ENCODE measurements at regions of chr3 and their contacts with region 1.

Region 1: DNA sequence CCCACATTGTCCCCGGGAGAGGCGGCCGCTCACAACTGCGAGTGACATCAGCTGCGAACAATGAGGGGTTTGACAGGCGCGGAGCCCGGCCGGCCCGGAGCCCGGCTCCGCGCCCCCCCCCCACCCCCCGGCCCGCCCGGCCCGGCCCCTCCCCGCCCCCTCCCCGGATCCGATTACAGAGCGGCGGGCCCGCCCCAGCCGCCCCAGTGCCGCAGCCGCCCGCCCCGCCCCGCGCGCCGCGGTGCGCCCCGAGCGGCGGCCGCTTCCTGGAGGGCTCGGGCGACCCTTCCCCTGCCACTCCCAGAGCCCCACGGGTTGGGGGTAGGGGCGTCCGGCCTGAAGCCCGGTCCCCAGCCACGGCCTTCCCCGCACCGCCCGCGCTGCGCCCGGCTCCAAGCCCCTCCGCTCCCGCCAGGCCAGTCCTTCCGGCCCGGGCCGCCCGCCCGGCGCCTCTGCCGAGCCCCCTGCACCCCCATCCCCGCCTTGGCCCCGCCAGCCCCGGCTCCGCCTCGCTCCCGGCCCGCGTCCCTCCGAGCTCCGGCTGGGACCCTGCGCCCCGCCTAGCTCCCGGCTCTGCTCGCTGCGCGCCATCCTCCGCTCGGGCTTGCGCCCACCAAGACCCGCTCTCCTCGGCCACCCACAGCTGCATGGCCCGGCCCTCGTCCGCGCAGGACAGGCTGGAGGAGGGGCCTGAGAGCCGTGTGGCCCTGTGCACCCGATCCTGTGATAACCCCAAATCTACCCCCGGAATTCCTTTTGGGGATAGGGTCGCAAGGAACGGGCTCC is at the start of gene PCBP4:
- DNase-seq: peak; percentile 45
- H3K4me3 ChIP-seq: peak within 1 kb of the TSS; percentile 37 to 75 (median 68)
- H3K27ac ChIP-seq: peak within 1 kb of the TSS; percentile 59
- H3K4me1 ChIP-seq: peaks cover 4% of the 10 kb centered on the region
- H3K27me3 ChIP-seq: no peaks in the 10 kb centered on the region
- CTCF ChIP-seq: no peak
- POLR2A ChIP-seq: no peak
- total RNA-seq, gene PCBP4: 42.7 and 46.5 TPM in 2 replicates

Region 2: DNA sequence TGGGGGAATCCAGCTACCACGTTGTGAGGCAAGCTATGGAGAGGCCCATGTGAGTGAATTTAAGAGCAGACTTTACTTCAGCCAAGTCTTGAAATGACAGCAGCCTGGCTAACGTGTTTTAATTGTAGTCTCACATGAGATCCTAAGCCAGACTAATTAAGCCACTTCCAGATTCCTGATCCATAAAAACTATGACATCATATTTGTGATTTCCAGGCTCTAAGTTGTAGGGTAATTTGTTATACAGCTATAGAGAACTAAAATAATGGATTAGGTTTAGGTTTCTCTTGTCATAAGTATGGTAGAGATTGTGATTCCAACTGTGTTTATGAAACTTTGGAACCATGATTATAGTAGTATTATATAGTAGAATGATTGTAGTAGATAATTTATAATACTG is 963.3 kb before region 1 on chr3:
- CTCF ChIA-PET with region 1: no interaction called
- POLR2A ChIA-PET with region 1: no interaction called
- dilution Hi-C with region 1: no loop called
- intact Hi-C with region 1: no loop called
- DNase-seq: no peak
- H3K4me3 ChIP-seq: no peak overlapping the region
- H3K27ac ChIP-seq: no peak overlapping the region
- H3K4me1 ChIP-seq: no peaks in the 10 kb centered on the region
- H3K27me3 ChIP-seq: no peaks in the 10 kb centered on the region
- CTCF ChIP-seq: no peak
- POLR2A ChIP-seq: no peak

Region 3: DNA sequence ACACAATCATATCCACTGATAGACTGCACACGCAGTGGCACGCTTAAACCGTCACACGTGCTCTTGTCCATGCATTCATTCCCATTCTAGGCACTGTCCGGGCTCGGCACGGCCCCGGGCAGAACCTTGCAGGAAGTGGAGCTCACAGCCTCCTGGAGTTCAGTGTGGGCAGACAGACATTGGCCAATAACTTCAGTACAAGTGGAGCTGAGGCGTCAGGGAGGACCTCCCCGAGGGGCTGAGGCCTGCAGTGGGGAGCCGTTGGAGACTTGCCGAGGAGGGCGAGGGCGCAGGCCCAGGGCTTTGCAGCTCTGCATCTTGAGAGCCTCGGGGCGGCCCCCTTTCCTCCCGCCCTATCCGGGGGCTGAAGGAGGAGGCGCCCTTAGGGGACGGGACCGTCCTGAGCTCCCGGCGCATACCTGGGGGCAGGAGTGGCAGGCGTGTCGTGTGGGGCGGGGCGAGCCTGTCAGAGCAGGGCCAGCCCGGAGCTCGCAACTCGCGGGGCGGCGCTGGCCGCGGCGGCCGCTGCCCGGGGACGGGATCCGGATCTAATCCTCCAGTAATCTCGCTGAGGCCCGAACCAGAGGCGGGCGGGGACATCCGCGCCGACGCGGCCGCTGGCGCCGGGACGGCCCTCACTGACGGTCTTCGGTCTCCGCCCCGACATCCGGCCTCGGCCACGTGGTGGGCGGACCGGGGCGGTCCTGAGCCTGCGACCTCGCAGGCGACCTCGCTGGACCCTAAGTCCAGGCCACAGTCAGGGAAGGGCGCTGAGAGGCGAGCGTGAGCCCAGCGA is 15.4 kb after region 1 on chr3 and contains the start of gene ACY1:
- CTCF ChIA-PET with region 1: interaction called, 37 read pairs
- POLR2A ChIA-PET with region 1: interaction called, 3 read pairs
- dilution Hi-C with region 1: no loop called
- intact Hi-C with region 1: no loop called
- DNase-seq: peak; percentile 87
- H3K4me3 ChIP-seq: peak within 1 kb of the TSS; percentile 28 to 48 (median 39)
- H3K27ac ChIP-seq: peak within 1 kb of the TSS; percentile 39
- H3K4me1 ChIP-seq: peaks cover 14% of the 10 kb centered on the region
- H3K27me3 ChIP-seq: no peaks in the 10 kb centered on the region
- CTCF ChIP-seq: no peak
- POLR2A ChIP-seq: peak; percentile 65
- total RNA-seq, gene ACY1: 12.3 and 13.4 TPM in 2 replicates

Region 4: DNA sequence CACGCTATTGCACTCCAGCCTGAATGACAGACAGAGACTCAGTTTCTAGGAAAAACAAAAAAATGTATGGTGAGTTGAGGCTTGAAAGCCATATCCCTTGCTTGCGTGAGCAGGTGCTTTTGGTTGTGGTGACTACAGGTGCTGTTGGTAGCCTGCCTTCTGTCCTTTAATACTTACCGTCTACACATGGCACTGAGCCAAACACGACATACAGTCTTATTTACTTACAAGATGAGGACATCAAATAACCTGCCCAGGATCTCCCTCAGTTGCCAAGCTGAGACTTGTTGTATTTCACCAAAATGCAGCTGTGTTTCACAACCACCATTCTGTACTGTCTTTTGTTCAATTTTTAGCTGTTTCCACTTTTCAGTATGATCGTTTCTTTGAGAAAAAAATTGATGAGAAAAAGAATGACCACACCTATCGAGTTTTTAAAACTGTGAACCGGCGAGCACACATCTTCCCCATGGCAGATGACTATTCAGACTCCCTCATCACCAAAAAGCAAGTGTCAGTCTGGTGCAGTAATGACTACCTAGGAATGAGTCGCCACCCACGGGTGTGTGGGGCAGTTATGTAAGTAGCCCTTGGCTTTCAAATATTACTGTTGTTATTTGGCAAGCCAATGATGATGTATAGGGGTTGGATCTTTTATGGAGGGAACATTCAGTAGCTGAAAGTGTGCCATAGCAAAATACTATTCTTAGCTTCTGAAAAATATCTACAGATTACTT is 236.9 kb after region 1 on chr3:
- CTCF ChIA-PET with region 1: no interaction called
- POLR2A ChIA-PET with region 1: no interaction called
- dilution Hi-C with region 1: no loop called
- intact Hi-C with region 1: no loop called
- DNase-seq: no peak
- H3K4me3 ChIP-seq: no peak overlapping the region
- H3K27ac ChIP-seq: no peak overlapping the region
- H3K4me1 ChIP-seq: peaks cover under 1% of the 10 kb centered on the region
- H3K27me3 ChIP-seq: no peaks in the 10 kb centered on the region
- CTCF ChIP-seq: no peak
- POLR2A ChIP-seq: no peak